Activated T-helper 1 cell treated with anti-CD3 and anti-CD28 coated beads, Interleukin-12 subunit alpha, Interleukin-12 subunit beta, Interleukin-2, Interleukin-4 antibody, amounts not matched to agents 30 ng/mL and 10 ng/mL and 1 ng/mL, durations not matched to agents 14 hours and 24 hours and 36 hours (primary cell): ENCODE measurements at regions of chr18 and their contacts with region 1.

Region 1: DNA sequence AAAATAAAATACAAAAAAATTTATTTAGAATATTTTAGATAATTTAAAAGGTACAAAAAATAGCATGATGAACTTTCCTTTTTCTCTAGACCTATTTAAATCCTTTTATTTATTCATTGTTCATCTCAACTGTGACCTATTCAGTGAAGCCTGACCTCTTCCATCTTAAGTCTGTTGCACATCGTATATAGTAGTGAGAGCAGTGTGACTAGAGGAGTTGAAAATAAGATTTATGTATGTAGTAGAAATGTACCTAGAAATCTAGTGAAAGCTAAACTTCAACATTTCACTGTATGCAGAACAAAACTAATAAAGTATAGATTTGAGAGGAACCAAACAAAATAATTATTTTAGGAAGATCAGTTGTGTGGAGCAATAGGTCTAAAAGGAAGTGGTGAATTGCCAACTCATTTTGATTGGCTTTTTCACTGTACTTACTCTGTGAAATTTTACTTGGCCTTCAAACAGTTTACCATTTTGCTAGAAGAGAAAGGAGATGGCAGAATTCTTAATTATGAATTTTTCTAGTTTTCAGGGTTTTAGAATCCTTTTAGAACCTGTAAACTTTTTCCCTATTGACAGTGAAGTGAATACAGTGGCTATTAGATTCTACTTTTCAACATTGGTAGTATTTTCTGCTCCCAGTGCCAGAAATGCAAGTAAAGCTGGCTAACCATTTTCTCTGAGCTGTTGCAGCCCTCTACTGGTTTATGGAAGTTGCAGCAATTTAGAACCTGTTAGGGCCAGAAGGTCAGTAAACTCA is 11.0 kb downstream of the ANKRD12 start:
- DNase-seq: peak; percentile 16
- H3K4me3 Mint-ChIP-seq: peak overlapping the region; percentile 38
- H3K27ac Mint-ChIP-seq: peak overlapping the region; percentile 88
- H3K4me1 Mint-ChIP-seq: peaks cover 77% of the 10 kb centered on the region
- H3K27me3 Mint-ChIP-seq: no peaks in the 10 kb centered on the region

Region 2: DNA sequence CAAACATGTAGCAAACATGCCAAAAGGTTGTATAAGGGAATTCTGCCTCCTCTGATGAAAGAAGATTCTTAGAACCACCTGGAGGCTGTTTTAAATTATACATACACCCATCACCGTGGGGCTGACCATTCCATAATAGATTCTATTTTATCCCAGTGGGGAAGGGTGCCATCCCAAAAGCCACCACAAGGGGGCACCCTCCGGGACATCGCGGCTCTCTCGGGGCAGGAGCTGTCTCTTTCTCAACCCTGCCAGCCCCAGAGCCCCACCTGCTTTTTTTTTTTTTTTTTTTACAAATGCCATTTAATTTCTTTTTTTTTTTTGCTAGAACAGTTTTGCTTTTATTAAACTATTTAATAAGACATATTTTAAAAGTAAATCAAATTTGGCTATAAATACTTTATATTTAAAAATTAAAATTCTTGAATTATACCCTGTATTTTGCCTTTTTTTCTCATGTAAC is 450.8 kb before region 1 on chr18:
- intact Hi-C with region 1: loop called (anchors 1 kb)
- DNase-seq: peak; percentile 63
- H3K4me3 Mint-ChIP-seq: no peak overlapping the region
- H3K27ac Mint-ChIP-seq: no peak overlapping the region
- H3K4me1 Mint-ChIP-seq: no peaks in the 10 kb centered on the region
- H3K27me3 Mint-ChIP-seq: peaks cover 25% of the 10 kb centered on the region

Region 3: DNA sequence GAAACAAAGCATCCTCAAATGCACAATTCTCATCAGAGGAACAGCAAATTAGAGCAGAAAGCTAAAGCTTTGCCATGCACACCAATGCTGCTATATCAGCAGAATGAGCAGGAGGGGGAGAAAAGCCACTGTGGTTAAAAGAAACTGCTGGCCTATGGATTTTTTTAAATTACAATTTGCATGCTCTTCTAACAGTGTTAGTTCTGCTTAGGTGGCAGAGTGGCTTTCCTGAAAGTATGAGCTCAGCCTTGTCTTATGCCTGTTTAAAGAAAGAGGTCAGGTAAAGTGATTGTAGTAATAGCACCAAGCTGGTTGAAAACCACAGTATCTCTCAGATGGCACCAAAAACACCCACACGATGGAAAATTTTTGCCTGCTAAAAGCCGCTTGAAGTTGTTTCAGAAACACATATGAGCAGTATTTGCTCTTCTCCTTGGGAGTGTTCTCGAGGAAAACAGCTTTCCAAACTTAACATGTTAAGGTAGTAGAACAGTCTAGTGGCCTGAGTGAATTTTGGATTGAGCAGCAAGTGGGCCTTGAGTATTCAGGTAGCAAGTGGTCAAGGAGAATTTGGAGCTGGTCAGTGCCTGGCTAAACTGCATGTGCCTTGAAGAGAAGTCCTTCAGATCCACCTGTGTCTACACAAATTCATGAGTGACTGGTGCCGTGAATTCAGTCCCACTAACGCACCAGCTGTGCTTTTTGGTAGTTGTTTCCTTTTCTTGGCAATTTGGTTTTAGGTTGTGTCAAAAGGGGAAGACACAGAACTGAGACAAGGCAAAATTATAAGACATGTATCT is 64.7 kb before region 1 on chr18:
- intact Hi-C with region 1: loop called (anchors 1 kb)
- DNase-seq: peak; percentile 51
- H3K4me3 Mint-ChIP-seq: peak overlapping the region; percentile 75
- H3K27ac Mint-ChIP-seq: peak overlapping the region; percentile 98
- H3K4me1 Mint-ChIP-seq: peaks cover 50% of the 10 kb centered on the region
- H3K27me3 Mint-ChIP-seq: no peaks in the 10 kb centered on the region

Region 4: GRCh38 chr18:9184998-9185613 is 37.5 kb after region 1 on chr18:
- intact Hi-C with region 1: loop called (anchors 2 kb)
- DNase-seq: no peak
- H3K4me3 Mint-ChIP-seq: peak overlapping the region; percentile 50
- H3K27ac Mint-ChIP-seq: peak overlapping the region; percentile 80
- H3K4me1 Mint-ChIP-seq: peaks cover 30% of the 10 kb centered on the region
- H3K27me3 Mint-ChIP-seq: no peaks in the 10 kb centered on the region

Region 5: GRCh38 chr18:9454061-9454703 is 306.6 kb after region 1 on chr18:
- intact Hi-C with region 1: no loop called
- DNase-seq: no peak
- H3K4me3 Mint-ChIP-seq: no peak overlapping the region
- H3K27ac Mint-ChIP-seq: no peak overlapping the region
- H3K4me1 Mint-ChIP-seq: no peaks in the 10 kb centered on the region
- H3K27me3 Mint-ChIP-seq: no peaks in the 10 kb centered on the region

Region 6: GRCh38 chr18:10525371-10526210 is 1378.0 kb after region 1 on chr18 and contains the start of gene NAPG:
- intact Hi-C with region 1: loop called (anchors 10 kb)
- DNase-seq: peak; percentile 91
- H3K4me3 Mint-ChIP-seq: peak within 1 kb of the TSS; percentile 97
- H3K27ac Mint-ChIP-seq: peak within 1 kb of the TSS; percentile 98
- H3K4me1 Mint-ChIP-seq: peaks cover 63% of the 10 kb centered on the region
- H3K27me3 Mint-ChIP-seq: peaks cover 7% of the 10 kb centered on the region
- total RNA-seq, gene NAPG: 37.4 and 40.3 TPM in 2 replicates